Common myeloid progenitor, CD34-positive (primary cell): ENCODE measurements at regions of chr7 and their contacts with region 1.

Region 1: DNA sequence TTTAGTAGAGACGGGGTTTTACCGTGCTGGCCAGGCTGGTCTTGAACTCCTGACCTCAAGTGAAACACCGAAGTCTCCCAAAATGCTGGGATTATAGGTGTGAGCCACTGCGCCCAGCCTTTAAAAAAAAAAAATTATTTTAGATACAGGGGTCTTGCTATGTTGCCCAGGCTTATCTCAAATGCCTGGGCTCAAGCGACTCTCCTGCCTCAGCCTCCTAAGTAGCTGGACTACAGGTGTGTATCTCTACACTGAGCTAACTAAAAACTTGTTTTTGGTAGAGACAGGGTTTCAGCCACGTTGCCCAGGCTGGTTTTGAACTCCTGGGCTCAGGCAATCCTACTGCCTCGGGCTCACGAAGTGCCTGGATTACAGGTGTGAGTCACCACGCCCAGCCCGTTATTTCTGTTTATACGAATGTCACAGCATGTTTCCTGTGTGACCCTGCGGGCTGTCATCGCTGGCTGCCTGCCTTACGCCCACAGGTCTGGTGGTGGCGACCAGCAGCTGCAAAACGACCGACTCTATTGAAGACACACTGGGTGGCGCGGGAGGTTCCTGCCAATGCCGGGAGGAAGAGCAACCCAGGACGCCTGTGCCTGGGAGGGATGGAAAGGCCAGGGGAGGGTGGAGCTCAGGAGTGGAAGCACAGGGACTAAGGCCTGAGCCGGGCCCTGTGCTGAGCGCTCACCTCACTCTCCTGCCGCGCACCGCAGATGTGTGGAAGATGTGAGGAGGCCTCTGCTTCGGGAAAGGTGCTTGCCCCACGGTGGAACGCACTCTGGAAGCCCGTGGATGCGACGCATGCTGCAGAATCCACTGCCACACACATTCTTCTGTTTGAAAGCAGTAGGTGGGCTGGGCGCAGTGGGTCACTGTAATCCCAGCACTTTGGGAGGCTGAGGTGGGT is 32.8 kb downstream of the AMZ1 start:
- DNase-seq: peak; percentile 85 to 89 (median 86)
- H3K4me3 ChIP-seq: peak overlapping the region in 1 of 7 experiments; percentile 9
- H3K27ac ChIP-seq: peak overlapping the region in 1 of 2 experiments; percentile 43
- H3K4me1 ChIP-seq: peaks cover 4 to 65% (median 58%) of the 10 kb centered on the region in 4 experiments
- H3K27me3 ChIP-seq: no peaks in the 10 kb centered on the region

Region 2: DNA sequence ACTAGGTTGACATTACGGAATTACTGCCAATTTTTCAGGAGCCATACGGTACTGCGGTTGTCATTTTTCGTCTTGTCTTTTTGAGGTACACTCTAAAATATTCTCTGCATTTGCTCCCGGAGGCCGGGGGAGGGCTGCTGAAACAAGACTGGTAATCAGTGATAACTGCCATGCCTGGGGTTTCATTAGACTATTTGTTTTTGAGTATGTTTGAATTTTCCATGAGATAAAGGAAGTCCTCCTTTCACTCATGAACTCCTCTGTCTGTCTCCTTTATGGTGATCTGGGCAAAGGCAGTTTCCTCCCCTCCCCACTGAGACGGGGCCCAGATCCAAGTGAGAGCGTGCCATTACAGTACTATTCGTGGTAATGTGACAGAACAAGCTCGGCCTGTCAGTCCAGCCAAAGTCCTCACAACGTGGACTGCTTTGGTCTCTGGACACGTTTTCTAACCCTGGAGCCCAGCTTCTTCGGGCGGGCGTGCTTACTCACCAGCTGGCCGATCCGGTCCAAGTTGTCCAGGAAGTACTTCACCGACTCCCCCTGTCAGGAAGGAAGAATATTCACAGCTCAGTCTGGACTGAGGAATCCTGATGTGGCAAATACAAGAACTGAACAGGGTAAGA is 12.2 kb after region 1 on chr7:
- CTCF ChIA-PET with region 1: interaction called, 441 read pairs
- POLR2A ChIA-PET with region 1: interaction called, 105 read pairs
- DNase-seq: peak in 2 of 3 donors; percentile 48 to 60
- H3K4me3 ChIP-seq: peak overlapping the region in 2 of 7 experiments; percentile 27 to 32
- H3K27ac ChIP-seq: peak overlapping the region; percentile 98 to 99
- H3K4me1 ChIP-seq: peaks cover 17 to 100% (median 89%) of the 10 kb centered on the region in 4 experiments
- H3K27me3 ChIP-seq: no peaks in the 10 kb centered on the region

Region 3: DNA sequence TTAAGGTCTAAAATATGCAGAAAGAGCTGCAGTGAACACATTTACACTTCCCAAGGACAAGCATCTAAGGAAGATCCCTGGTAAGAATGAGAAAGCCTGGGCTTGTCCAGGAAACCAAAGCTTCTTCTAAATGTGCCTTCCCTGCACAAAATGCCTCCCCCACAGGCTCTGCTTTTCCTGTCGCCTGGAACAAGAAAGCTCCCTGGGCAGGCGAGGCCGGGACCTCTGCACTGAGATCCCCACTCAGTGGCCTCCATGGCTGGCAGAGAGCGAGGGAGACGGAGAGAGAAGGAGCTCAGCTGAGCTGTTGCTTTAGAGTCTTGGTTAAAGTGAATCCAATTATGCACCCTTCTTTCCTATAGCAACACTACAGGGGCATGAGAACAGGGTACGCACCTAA is 42.8 kb after region 1 on chr7:
- CTCF ChIA-PET with region 1: interaction called, 21 read pairs
- POLR2A ChIA-PET with region 1: interaction called, 3 read pairs
- DNase-seq: no peak
- H3K4me3 ChIP-seq: no peak overlapping the region
- H3K27ac ChIP-seq: peak overlapping the region in 1 of 2 experiments; percentile 73
- H3K4me1 ChIP-seq: peaks cover 0 to 52% (median 42%) of the 10 kb centered on the region in 4 experiments
- H3K27me3 ChIP-seq: no peaks in the 10 kb centered on the region